Activated CD4-positive, alpha-beta memory T cell treated with anti-CD3 and anti-CD28 coated beads for 36 hours (primary cell): ENCODE measurements at regions of chr5 and their contacts with region 1.

Region 1: DNA sequence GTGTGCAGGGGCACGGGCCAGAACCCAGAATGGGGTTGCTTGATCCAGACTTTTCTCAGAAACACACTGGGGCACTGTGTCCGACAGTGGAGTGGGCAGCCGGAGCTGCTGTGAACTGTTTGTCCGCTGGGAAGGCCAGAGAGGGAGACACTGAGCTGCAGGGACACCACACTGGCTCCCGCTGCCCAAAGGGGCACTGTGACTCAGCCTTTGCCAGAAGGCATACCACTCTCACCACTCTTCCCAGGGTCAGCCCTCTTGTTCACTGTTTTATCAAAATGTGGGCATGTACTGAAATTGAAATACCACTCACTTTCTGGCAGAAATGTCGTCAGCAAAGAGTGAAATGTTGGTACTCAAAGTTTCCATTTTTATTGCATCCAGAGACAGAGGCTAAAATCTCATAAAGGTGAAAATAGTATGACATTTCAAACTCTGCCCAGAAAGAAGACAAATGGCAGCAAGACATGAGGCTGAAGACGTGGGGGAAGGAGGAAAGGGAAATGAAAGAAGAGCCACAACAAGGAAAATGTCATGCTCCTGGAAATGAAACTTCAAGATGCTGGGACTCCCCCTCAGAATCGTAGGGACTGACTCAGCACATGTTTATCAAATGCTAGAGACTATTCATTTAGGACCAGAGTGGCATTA is 4.5 kb upstream of the IL7R start:
- DNase-seq: peak; percentile 75
- H3K4me3 Mint-ChIP-seq: peak overlapping the region; percentile 93
- H3K27ac Mint-ChIP-seq: peak overlapping the region; percentile 100
- H3K4me1 Mint-ChIP-seq: peaks cover 75% of the 10 kb centered on the region
- H3K27me3 Mint-ChIP-seq: no peaks in the 10 kb centered on the region

Region 2: GRCh38 chr5:35617435-35618303 is 234.5 kb before region 1 on chr5 and contains the start of gene SPEF2:
- CTCF ChIA-PET with region 1: no interaction called
- POLR2A ChIA-PET with region 1: no interaction called
- intact Hi-C with region 1: loop called (anchors 5 kb)
- DNase-seq: peak; percentile 89
- H3K4me3 Mint-ChIP-seq: peak within 1 kb of the TSS; percentile 77
- H3K27ac Mint-ChIP-seq: peak within 1 kb of the TSS; percentile 83
- H3K4me1 Mint-ChIP-seq: peaks cover 34% of the 10 kb centered on the region
- H3K27me3 Mint-ChIP-seq: peaks cover 1% of the 10 kb centered on the region
- total RNA-seq, gene SPEF2: 10.6 to 13.0 TPM

Region 3: DNA sequence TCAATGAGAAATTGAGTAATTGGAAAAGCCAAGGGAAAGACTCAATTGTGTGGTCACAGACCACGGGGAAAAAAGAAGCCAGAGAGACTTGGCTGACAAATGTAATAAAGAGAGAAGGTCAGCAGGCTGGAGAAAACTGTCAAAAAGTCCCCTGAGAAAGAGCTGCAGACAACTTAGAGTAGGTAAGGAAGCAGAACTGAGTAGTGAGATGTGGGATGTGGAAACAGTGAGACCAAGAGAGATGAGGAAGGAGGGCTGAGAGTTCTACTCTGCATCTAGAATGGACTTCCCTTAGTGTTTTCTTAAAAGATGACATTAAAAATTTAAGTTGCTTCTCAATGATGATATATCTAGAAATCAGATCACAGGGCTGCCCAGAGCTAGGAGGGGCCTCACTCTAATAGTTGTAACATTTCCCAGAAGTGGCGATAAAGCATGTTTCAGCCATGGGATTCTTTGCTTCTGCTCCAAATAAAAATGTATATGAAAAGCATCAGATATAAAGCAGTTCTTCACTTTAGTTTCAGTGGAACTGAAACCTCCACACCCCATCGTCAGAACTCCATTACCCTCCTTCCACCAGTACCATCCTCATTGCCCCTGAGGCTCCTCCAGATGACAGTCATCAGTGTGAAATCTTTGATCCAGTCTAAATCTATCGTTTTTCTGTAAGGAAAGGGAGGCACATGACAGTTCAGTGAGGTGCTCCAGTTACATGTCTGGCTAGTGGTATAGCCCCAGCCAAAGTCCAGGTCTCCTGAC is 154.0 kb before region 1 on chr5:
- CTCF ChIA-PET with region 1: no interaction called
- POLR2A ChIA-PET with region 1: no interaction called
- intact Hi-C with region 1: no loop called
- DNase-seq: no peak
- H3K4me3 Mint-ChIP-seq: no peak overlapping the region
- H3K27ac Mint-ChIP-seq: no peak overlapping the region
- H3K4me1 Mint-ChIP-seq: no peaks in the 10 kb centered on the region
- H3K27me3 Mint-ChIP-seq: no peaks in the 10 kb centered on the region

Region 4: DNA sequence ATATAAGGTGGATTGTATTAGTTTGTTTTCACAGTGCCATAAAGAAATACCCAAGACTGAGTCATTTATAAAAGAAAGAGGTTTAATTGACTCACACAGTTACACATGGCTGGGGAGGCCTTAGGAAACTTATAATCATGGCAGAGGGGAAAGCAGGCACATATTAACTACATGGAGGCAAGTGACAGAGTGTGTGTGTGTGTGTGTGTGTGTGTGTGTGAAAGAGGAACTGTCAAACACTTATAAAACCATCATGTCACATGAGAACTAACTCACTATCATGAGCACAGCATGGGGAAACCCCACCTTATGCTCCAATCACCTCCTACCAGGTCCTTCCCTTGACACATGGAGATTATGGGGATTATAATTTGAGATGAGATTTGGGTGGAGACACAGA is 115.9 kb before region 1 on chr5:
- CTCF ChIA-PET with region 1: no interaction called
- POLR2A ChIA-PET with region 1: no interaction called
- intact Hi-C with region 1: loop called (anchors 2 kb)
- DNase-seq: peak; percentile 68
- H3K4me3 Mint-ChIP-seq: no peak overlapping the region
- H3K27ac Mint-ChIP-seq: peak overlapping the region; percentile 77
- H3K4me1 Mint-ChIP-seq: peaks cover 47% of the 10 kb centered on the region
- H3K27me3 Mint-ChIP-seq: no peaks in the 10 kb centered on the region

Region 5: DNA sequence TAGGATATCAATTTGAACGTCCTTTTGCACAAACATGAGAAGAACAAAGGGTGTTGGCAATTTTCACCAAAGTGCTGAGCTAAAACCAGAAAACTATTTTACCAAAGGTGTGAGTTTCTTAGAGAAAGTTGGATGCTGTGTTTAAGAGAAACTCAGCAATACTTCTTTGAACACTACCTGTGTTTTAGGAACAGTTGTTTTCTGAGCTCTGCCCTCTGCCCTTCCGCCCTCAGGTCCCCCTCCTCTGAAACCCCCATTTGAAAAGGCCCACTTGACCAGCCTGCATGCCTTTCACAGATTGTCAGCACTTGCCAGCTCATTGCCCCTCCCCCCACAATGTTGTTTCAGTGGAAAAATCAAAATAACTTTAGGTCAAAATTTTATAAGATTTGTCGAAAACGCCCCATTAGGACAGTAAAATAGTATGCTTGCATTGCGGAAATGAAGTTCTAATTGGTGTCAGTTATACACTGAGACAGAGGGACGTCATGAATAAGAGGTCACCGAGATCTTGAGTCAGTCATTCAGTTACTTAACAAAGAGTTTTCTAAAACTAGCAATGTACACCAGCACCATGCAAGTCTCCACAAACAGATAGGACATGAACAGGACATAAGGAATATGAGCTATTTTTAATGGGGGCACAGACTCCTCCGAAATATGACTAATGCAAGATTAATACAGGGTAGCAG is 57.4 kb before region 1 on chr5:
- CTCF ChIA-PET with region 1: interaction called, 12 read pairs
- POLR2A ChIA-PET with region 1: interaction called, 50 read pairs
- intact Hi-C with region 1: loop called (anchors 1 kb)
- DNase-seq: no peak
- H3K4me3 Mint-ChIP-seq: peak overlapping the region; percentile 31
- H3K27ac Mint-ChIP-seq: peak overlapping the region; percentile 89
- H3K4me1 Mint-ChIP-seq: peaks cover 86% of the 10 kb centered on the region
- H3K27me3 Mint-ChIP-seq: no peaks in the 10 kb centered on the region

Region 6: DNA sequence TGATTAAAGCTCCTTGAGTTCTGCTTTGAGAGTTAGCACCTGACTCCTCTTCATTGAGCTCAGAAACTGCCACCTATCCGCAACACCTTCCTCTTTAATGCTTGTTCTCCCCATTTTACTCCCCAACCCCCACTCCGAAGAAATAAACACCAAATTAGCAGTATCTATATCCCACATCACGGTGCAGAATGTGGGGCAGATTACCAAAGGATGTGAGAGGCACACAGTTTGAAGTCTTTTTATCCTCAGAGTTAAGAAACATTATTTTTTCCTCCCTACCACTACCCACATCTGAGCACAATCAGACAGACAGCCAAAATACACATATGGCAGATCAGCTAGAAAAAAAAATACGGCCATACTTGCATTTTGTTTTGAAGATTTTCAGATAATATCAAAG is 21.6 kb before region 1 on chr5:
- CTCF ChIA-PET with region 1: interaction called, 5 read pairs
- POLR2A ChIA-PET with region 1: interaction called, 160 read pairs
- intact Hi-C with region 1: no loop called
- DNase-seq: no peak
- H3K4me3 Mint-ChIP-seq: peak overlapping the region; percentile 27
- H3K27ac Mint-ChIP-seq: peak overlapping the region; percentile 96
- H3K4me1 Mint-ChIP-seq: peaks cover 94% of the 10 kb centered on the region
- H3K27me3 Mint-ChIP-seq: no peaks in the 10 kb centered on the region

Region 7: GRCh38 chr5:35884115-35884788 is 32.0 kb after region 1 on chr5:
- CTCF ChIA-PET with region 1: no interaction called
- POLR2A ChIA-PET with region 1: no interaction called
- intact Hi-C with region 1: loop called (anchors 1 kb)
- DNase-seq: no peak
- H3K4me3 Mint-ChIP-seq: no peak overlapping the region
- H3K27ac Mint-ChIP-seq: peak overlapping the region; percentile 86
- H3K4me1 Mint-ChIP-seq: peaks cover 40% of the 10 kb centered on the region
- H3K27me3 Mint-ChIP-seq: no peaks in the 10 kb centered on the region

Region 8: GRCh38 chr5:35926389-35927051 is 74.3 kb after region 1 on chr5:
- CTCF ChIA-PET with region 1: interaction called, 26 read pairs
- POLR2A ChIA-PET with region 1: interaction called, 19 read pairs
- intact Hi-C with region 1: loop called (anchors 1 kb)
- DNase-seq: peak; percentile 65
- H3K4me3 Mint-ChIP-seq: peak overlapping the region; percentile 40
- H3K27ac Mint-ChIP-seq: no peak overlapping the region
- H3K4me1 Mint-ChIP-seq: peaks cover 41% of the 10 kb centered on the region
- H3K27me3 Mint-ChIP-seq: peaks cover 12% of the 10 kb centered on the region

Region 9: GRCh38 chr5:35979715-35980114 is 127.5 kb after region 1 on chr5:
- CTCF ChIA-PET with region 1: no interaction called
- POLR2A ChIA-PET with region 1: no interaction called
- intact Hi-C with region 1: no loop called
- DNase-seq: no peak
- H3K4me3 Mint-ChIP-seq: no peak overlapping the region
- H3K27ac Mint-ChIP-seq: no peak overlapping the region
- H3K4me1 Mint-ChIP-seq: no peaks in the 10 kb centered on the region
- H3K27me3 Mint-ChIP-seq: peaks cover 1% of the 10 kb centered on the region